Activated CD4-positive, alpha-beta memory T cell treated with anti-CD3 and anti-CD28 coated beads, Interleukin-2, amount 10 ng/mL, durations not matched to agents 7 days and 5 days (primary cell): ENCODE measurements at regions of chr12 and their contacts with region 1.

Region 1: GRCh38 chr12:31651893-31652521 is 7.5 kb upstream of the ETFBKMT start:
- DNase-seq: no peak
- H3K4me3 Mint-ChIP-seq: no peak overlapping the region
- H3K27ac Mint-ChIP-seq: no peak overlapping the region
- H3K4me1 Mint-ChIP-seq: peaks cover 12% of the 10 kb centered on the region
- H3K27me3 Mint-ChIP-seq: no peaks in the 10 kb centered on the region

Region 2: DNA sequence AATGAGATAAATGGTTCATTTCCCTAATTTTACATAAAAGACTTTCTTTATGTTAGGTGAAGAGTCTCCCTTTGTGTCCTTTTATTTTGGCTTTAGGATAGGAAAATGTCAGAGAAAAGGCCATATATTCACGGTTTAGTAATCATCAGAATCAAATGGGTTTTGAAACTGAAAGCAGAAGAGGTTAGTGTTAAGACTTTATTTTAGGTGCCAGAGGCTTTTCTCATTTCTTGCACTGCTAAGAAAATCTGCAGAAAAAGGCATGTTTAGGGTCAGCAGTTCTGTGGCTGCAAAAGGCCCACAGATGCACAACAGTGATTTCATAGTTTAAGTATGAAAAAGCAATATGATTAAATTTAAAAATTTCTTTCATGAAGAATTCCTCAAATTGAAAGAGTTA is 245.7 kb before region 1 on chr12:
- CTCF ChIA-PET with region 1: interaction called, 16 read pairs
- POLR2A ChIA-PET with region 1: no interaction called
- DNase-seq: no peak
- H3K4me3 Mint-ChIP-seq: no peak overlapping the region
- H3K27ac Mint-ChIP-seq: no peak overlapping the region
- H3K4me1 Mint-ChIP-seq: peaks cover 5% of the 10 kb centered on the region
- H3K27me3 Mint-ChIP-seq: peaks cover 2% of the 10 kb centered on the region

Region 3: GRCh38 chr12:31629756-31630732 is 22.0 kb before region 1 on chr12:
- CTCF ChIA-PET with region 1: no interaction called
- POLR2A ChIA-PET with region 1: no interaction called
- DNase-seq: no peak
- H3K4me3 Mint-ChIP-seq: no peak overlapping the region
- H3K27ac Mint-ChIP-seq: no peak overlapping the region
- H3K4me1 Mint-ChIP-seq: no peaks in the 10 kb centered on the region
- H3K27me3 Mint-ChIP-seq: peaks cover 5% of the 10 kb centered on the region

Region 4: DNA sequence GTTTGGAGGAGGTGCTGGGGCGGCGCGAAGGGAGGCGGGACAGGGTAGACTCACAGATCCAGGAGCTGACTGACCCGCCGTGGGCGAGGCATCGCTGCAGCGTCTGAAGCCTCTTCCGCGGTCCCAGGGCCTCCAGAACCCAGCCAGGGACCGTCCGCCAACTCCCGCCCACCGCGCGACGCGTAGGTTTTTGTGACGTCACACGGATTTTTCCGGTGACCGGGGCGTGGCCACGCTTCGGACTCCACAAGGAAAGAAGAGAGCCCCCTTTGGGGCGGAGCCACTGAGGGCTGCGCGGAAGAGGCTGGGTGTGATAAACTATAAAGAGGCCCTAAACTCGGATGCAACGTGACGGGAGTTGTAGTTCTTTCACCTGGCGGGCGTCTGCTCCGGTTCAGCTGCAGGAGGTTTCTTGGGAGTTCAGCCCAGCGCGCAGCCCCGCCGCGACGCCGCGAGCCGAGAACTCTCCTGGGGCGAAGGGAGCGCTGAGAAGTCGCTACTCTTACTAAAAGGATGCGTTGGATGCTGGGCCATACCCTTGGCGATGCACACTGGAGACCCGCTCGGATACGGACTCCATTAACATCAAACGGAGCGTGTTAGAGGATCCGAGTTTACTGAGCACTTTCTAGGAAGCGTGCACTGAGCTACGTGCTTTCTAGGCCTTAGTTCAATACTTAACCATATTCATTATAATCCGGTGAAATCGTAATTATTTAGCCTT is 77.1 kb after region 1 on chr12 and contains the start of gene AMN1:
- CTCF ChIA-PET with region 1: interaction called, 8 read pairs
- POLR2A ChIA-PET with region 1: interaction called, 19 read pairs
- DNase-seq: peak; percentile 100
- H3K4me3 Mint-ChIP-seq: peak within 1 kb of the TSS; percentile 95
- H3K27ac Mint-ChIP-seq: peak within 1 kb of the TSS; percentile 99
- H3K4me1 Mint-ChIP-seq: peaks cover 51% of the 10 kb centered on the region
- H3K27me3 Mint-ChIP-seq: no peaks in the 10 kb centered on the region
- total RNA-seq, gene AMN1: 3.2 to 4.0 TPM

Region 5: GRCh38 chr12:32106517-32107358 is 454.7 kb after region 1 on chr12 and contains the start of gene BICD1:
- CTCF ChIA-PET with region 1: interaction called, 16 read pairs
- POLR2A ChIA-PET with region 1: interaction called, 3 read pairs
- DNase-seq: peak; percentile 79
- H3K4me3 Mint-ChIP-seq: peak within 1 kb of the TSS; percentile 81
- H3K27ac Mint-ChIP-seq: peak within 1 kb of the TSS; percentile 79
- H3K4me1 Mint-ChIP-seq: peaks cover 32% of the 10 kb centered on the region
- H3K27me3 Mint-ChIP-seq: peaks cover 8% of the 10 kb centered on the region
- total RNA-seq, gene BICD1: 12.5 to 15.9 TPM

Region 6: GRCh38 chr12:32312049-32312670 is 660.2 kb after region 1 on chr12:
- CTCF ChIA-PET with region 1: interaction called, 93 read pairs
- POLR2A ChIA-PET with region 1: no interaction called
- DNase-seq: no peak
- H3K4me3 Mint-ChIP-seq: no peak overlapping the region
- H3K27ac Mint-ChIP-seq: no peak overlapping the region
- H3K4me1 Mint-ChIP-seq: peaks cover 5% of the 10 kb centered on the region
- H3K27me3 Mint-ChIP-seq: no peaks in the 10 kb centered on the region

Region 7: GRCh38 chr12:32755654-32756475 is 1103.9 kb after region 1 on chr12 and contains the start of gene YARS2:
- CTCF ChIA-PET with region 1: interaction called, 26 read pairs
- POLR2A ChIA-PET with region 1: interaction called, 5 read pairs
- DNase-seq: peak; percentile 90
- H3K4me3 Mint-ChIP-seq: peak within 1 kb of the TSS; percentile 79
- H3K27ac Mint-ChIP-seq: peak within 1 kb of the TSS; percentile 78
- H3K4me1 Mint-ChIP-seq: peaks cover 20% of the 10 kb centered on the region
- H3K27me3 Mint-ChIP-seq: peaks cover 1% of the 10 kb centered on the region
- total RNA-seq, gene YARS2: 17.0 to 19.3 TPM